IMR-90 (cell line): ENCODE measurements at regions of chr6 and their contacts with region 1.

Region 1: GRCh38 chr6:168956884-168957730 is 296.5 kb downstream of the THBS2 start:
- DNase-seq: peak; percentile 80
- ATAC-seq: peak; percentile 99
- H3K4me3 ChIP-seq: no peak overlapping the region
- H3K27ac ChIP-seq: no peak overlapping the region
- H3K4me1 ChIP-seq: peaks cover 3% of the 10 kb centered on the region
- H3K27me3 ChIP-seq: no peaks in the 10 kb centered on the region
- CTCF ChIP-seq: peak; percentile 93
- POLR2A ChIP-seq: peak; percentile 42; the same call in 1 of the 2 replicates
- RAD21 ChIP-seq: peak; percentile 97

Region 2: GRCh38 chr6:169070506-169071176 is 113.5 kb after region 1 on chr6:
- CTCF ChIA-PET with region 1: no interaction called
- POLR2A ChIA-PET with region 1: no interaction called
- dilution Hi-C with region 1: no loop called
- in situ Hi-C with region 1: no loop called
- intact Hi-C with region 1: loop called (anchors 5 kb)
- DNase-seq: peak; percentile 100
- ATAC-seq: peak; percentile 92
- H3K4me3 ChIP-seq: no peak overlapping the region
- H3K27ac ChIP-seq: peak overlapping the region; percentile 84; the same call in 1 of the 2 replicates
- H3K4me1 ChIP-seq: peaks cover 27% of the 10 kb centered on the region
- H3K27me3 ChIP-seq: no peaks in the 10 kb centered on the region
- CTCF ChIP-seq: peak; percentile 32
- POLR2A ChIP-seq: no peak
- RAD21 ChIP-seq: peak; percentile 52

Region 3: GRCh38 chr6:169215201-169215681 is 258.1 kb after region 1 on chr6:
- CTCF ChIA-PET with region 1: no interaction called
- POLR2A ChIA-PET with region 1: no interaction called
- dilution Hi-C with region 1: no loop called
- in situ Hi-C with region 1: no loop called
- intact Hi-C with region 1: loop called (anchors 2 kb)
- DNase-seq: peak; percentile 35
- ATAC-seq: no peak
- H3K4me3 ChIP-seq: no peak overlapping the region
- H3K27ac ChIP-seq: peak overlapping the region; percentile 93
- H3K4me1 ChIP-seq: peaks cover 19% of the 10 kb centered on the region
- H3K27me3 ChIP-seq: no peaks in the 10 kb centered on the region
- CTCF ChIP-seq: no peak
- POLR2A ChIP-seq: no peak
- RAD21 ChIP-seq: no peak

Region 4: GRCh38 chr6:169292338-169293124 is 335.4 kb after region 1 on chr6:
- CTCF ChIA-PET with region 1: interaction called, 3 read pairs
- POLR2A ChIA-PET with region 1: no interaction called
- dilution Hi-C with region 1: no loop called
- in situ Hi-C with region 1: no loop called
- intact Hi-C with region 1: loop called (anchors 5 kb)
- DNase-seq: peak; percentile 97
- ATAC-seq: peak; percentile 72
- H3K4me3 ChIP-seq: no peak overlapping the region
- H3K27ac ChIP-seq: peak overlapping the region; percentile 81
- H3K4me1 ChIP-seq: peaks cover 14% of the 10 kb centered on the region
- H3K27me3 ChIP-seq: no peaks in the 10 kb centered on the region
- CTCF ChIP-seq: no peak
- POLR2A ChIP-seq: no peak
- RAD21 ChIP-seq: no peak

Region 5: DNA sequence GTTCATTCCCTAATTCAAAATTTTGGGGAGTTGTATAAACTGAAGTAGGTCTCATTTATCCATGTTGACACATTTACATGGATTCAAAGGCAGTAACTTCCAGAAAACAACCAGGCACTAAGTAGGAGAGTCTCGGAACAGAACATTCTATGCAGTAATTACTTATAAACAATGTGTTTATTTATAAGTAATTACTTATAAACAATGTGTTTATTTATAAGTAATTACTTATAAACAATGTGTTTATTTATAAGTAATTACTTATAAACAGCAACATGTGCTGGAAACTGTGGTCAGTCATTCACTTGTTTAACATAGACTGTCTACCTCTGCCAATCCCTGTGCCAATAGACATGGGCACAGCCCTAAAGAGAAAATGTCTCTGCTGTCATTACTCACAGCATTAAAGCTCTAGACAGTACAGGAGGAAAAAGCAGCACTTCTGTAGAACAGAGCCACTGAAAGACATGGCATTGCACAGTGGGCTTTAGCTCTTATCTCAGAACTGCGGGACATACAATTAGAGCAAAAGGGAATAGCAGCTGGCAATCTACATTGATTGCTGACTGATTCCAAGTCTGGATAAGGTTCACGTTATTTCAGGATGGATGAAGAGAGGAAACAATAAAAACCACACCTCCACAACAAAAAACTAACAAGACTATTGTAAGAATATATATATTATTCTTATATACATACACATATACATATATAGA is 556.5 kb after region 1 on chr6:
- CTCF ChIA-PET with region 1: no interaction called
- POLR2A ChIA-PET with region 1: no interaction called
- dilution Hi-C with region 1: no loop called
- in situ Hi-C with region 1: loop called (anchors 10 kb)
- intact Hi-C with region 1: no loop called
- DNase-seq: no peak
- ATAC-seq: no peak
- H3K4me3 ChIP-seq: no peak overlapping the region
- H3K27ac ChIP-seq: no peak overlapping the region
- H3K4me1 ChIP-seq: no peaks in the 10 kb centered on the region
- H3K27me3 ChIP-seq: no peaks in the 10 kb centered on the region
- CTCF ChIP-seq: no peak
- POLR2A ChIP-seq: no peak
- RAD21 ChIP-seq: no peak

Region 6: DNA sequence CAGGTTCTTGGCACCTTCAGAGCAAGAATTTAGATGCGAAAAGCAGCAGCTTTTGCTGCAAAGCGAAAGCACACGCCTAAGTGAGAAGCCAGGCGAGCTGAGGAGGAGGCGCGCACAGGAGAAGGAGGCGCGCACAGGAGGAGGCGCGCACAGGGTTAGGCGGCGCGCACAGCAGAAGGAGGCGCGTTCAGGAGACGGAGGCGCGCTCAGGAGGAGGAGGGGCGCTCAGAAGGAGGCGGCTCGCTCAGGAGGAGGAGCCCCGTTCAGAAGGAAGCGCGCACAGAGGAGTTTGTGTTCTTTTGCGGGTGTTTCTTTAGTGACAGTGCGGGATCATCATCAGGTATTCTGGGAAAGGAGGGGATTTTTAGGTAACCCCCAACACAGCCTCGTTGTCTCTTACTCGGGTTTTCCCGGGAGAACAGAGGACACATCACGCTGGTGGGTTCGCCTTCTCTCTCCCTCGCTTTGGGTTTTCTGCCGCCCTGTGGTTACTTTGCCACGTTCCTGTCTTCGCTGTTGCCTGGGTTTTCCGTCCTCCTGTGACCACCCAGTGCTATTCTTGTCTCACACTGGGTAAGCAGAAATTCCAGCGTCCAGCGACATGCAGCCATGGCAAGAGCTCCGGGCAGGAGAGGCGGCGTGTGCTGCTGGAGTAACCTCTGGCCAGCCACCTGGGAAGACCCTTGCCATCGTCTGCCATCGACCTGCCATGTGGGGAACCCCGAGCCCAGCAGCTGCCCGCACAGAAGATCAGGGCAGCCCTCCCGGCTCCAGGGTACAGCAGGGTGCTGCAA is 697.7 kb after region 1 on chr6:
- CTCF ChIA-PET with region 1: no interaction called
- POLR2A ChIA-PET with region 1: no interaction called
- dilution Hi-C with region 1: no loop called
- in situ Hi-C with region 1: no loop called
- intact Hi-C with region 1: loop called (anchors 10 kb)
- DNase-seq: peak; percentile 61
- ATAC-seq: peak; percentile 93
- H3K4me3 ChIP-seq: peak overlapping the region; percentile 55
- H3K27ac ChIP-seq: peak overlapping the region; percentile 56
- H3K4me1 ChIP-seq: no peaks in the 10 kb centered on the region
- H3K27me3 ChIP-seq: no peaks in the 10 kb centered on the region
- CTCF ChIP-seq: peak; percentile 41; the same call in 1 of the 2 replicates
- POLR2A ChIP-seq: no peak; the same call in 1 of the 2 replicates
- RAD21 ChIP-seq: peak; percentile 56